Activated CD4-positive, alpha-beta T cell treated with anti-CD3 and anti-CD28 coated beads for 36 hours (primary cell): ENCODE measurements at regions of chr12 and their contacts with region 1.

Region 1: DNA sequence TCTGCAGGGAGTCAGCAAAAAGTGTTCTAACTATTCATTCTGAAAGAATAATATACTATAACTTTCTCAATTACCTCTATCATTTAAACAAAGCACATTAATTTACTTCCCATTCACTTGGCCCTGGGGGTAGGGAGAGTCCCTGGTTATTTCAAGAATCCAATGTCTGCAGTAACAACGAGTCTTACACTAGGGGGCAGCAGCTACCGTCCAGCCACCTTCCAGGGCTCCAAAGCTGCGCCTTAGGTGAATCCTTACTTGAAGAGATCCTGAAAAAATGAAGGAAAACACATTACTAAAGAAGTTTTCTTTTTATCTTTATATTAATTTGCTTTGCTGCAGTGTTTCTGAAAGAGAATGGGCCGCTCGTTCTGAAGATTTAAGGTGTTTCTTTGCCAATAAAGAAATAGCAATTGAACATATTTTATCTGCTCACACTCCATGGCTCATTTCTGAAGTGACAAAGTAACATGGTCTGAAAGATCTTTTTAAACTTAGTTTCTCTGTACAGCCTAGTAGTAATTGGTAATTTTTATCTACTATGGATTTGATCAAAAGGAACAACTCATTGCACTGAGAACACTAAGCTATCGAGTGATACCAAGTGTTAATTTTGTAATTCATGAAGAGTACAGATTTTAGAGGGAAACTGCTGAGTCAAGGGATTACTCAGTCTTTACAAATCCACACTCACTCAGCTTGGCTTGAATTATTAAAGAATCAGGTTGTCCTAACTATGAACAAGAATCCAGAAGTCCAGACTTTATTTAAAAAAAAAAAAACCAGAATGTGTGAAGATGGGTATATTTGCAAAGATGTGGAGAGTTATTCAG is 27.6 kb downstream of the BHLHE41 start:
- DNase-seq: peak; percentile 73
- ATAC-seq: peak; percentile 84
- H3K4me3 Mint-ChIP-seq: no peak overlapping the region
- H3K27ac Mint-ChIP-seq: no peak overlapping the region
- H3K4me1 Mint-ChIP-seq: no peaks in the 10 kb centered on the region
- H3K27me3 Mint-ChIP-seq: peaks cover 11% of the 10 kb centered on the region

Region 2: GRCh38 chr12:26523708-26524150 is 426.5 kb after region 1 on chr12:
- CTCF ChIA-PET with region 1: interaction called, 3 read pairs
- POLR2A ChIA-PET with region 1: no interaction called
- intact Hi-C with region 1: loop called in 1 of 2 experiments (anchors 2 kb)
- DNase-seq: no peak
- ATAC-seq: no peak
- H3K4me3 Mint-ChIP-seq: no peak overlapping the region
- H3K27ac Mint-ChIP-seq: no peak overlapping the region
- H3K4me1 Mint-ChIP-seq: peaks cover 10% of the 10 kb centered on the region
- H3K27me3 Mint-ChIP-seq: no peaks in the 10 kb centered on the region

Region 3: DNA sequence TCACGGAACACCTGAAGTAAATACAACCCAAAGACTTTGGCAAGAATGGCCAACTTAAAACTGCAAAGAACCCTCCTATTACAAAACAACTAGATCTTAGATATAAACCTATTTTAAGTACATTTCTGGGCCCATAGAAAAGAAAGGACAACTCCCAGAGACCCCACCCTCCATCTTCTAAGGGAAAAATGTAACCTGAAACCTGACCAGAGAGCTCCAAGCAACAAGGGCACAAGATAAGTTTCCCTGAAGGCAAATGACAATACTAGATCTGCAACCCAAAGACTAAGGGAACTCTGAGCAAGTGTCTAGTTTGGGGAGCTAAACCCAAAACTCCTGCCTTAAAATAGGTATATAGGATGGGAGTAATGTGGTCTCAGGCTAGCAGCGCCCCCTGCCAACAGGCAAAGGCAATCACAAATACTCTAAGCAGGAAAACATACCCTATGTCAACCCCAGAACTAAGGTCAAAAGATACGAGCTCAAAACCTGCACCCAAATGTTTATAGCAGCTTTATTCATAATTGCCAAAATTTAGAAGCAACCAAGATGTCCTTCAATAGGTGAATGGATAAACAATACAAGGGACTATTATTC is 516.9 kb after region 1 on chr12:
- CTCF ChIA-PET with region 1: interaction called, 8 read pairs
- POLR2A ChIA-PET with region 1: no interaction called
- intact Hi-C with region 1: loop called (anchors 1 kb)
- DNase-seq: peak; percentile 57
- ATAC-seq: no peak
- H3K4me3 Mint-ChIP-seq: no peak overlapping the region
- H3K27ac Mint-ChIP-seq: no peak overlapping the region
- H3K4me1 Mint-ChIP-seq: no peaks in the 10 kb centered on the region
- H3K27me3 Mint-ChIP-seq: no peaks in the 10 kb centered on the region

Region 4: GRCh38 chr12:26651566-26652188 is 554.4 kb after region 1 on chr12:
- CTCF ChIA-PET with region 1: interaction called, 4 read pairs
- POLR2A ChIA-PET with region 1: no interaction called
- intact Hi-C with region 1: loop called (anchors 1 kb)
- DNase-seq: peak; percentile 59
- ATAC-seq: peak; percentile 55
- H3K4me3 Mint-ChIP-seq: no peak overlapping the region
- H3K27ac Mint-ChIP-seq: no peak overlapping the region
- H3K4me1 Mint-ChIP-seq: no peaks in the 10 kb centered on the region
- H3K27me3 Mint-ChIP-seq: no peaks in the 10 kb centered on the region

Region 5: DNA sequence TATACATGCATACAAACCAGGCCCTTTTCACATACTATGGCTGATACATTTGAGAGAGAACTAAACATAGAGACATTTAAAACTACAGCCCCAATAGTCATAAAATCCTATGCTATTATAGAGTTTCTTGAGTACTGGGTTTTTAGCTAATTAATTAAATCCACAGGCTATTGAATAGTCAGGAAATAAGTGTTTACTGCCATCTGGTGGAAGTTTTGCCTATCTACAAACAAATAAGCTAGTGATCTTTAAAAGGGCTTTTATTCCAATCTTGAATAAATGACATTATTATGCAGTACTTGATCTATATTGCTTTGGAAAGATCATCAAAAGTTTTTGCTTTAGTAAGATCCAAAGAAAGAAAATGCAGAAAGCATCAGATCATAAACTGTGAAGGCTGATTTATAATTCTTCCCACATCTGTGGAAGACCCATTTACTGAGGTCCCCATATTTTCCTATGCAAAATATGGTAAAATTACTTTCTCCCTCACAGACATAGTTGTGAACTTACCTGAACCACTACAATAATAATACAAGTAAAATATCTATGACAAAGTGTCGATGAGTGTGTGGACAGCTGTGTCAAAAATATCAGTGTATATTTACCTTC is 604.4 kb after region 1 on chr12:
- CTCF ChIA-PET with region 1: interaction called, 12 read pairs
- POLR2A ChIA-PET with region 1: no interaction called
- intact Hi-C with region 1: loop called (anchors 1 to 2 kb)
- DNase-seq: no peak
- ATAC-seq: peak; percentile 51
- H3K4me3 Mint-ChIP-seq: no peak overlapping the region
- H3K27ac Mint-ChIP-seq: no peak overlapping the region
- H3K4me1 Mint-ChIP-seq: peaks cover 13% of the 10 kb centered on the region
- H3K27me3 Mint-ChIP-seq: no peaks in the 10 kb centered on the region